ENCODE measurements at regions of chr9 and their contacts with region 1.

Region 1: GRCh38 chr9:91334053-91334452 is 27.7 kb downstream of the AUH start:
- DNase-seq: no peak
- H3K4me3 Mint-ChIP-seq: no peak overlapping the region
- H3K27ac Mint-ChIP-seq: no peak overlapping the region
- H3K4me1 Mint-ChIP-seq: peaks cover 12% of the 10 kb centered on the region
- H3K27me3 Mint-ChIP-seq: no peaks in the 10 kb centered on the region

Region 2: DNA sequence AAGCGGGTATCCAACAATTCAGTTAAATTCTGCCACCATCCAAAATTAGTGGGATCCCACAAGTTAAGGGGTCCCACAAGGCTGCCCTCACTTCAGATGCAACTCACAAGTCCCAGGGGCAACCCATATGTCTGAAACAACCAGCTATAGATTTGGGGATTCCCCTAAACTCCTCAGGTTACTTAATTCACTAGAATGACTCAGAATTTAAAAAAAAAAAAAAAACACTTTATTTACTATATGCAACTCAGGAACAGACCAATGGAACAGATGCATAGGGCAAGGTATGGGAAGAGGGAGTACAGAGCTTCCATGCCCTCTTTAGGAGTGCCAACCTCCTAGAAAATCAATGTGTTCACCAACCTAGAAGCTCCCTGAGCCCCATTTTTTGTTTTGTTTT is 12.6 kb after region 1 on chr9:
- CTCF ChIA-PET with region 1: interaction called, 11 read pairs
- POLR2A ChIA-PET with region 1: interaction called, 4 read pairs
- DNase-seq: no peak
- H3K4me3 Mint-ChIP-seq: no peak overlapping the region
- H3K27ac Mint-ChIP-seq: no peak overlapping the region
- H3K4me1 Mint-ChIP-seq: peaks cover 38% of the 10 kb centered on the region
- H3K27me3 Mint-ChIP-seq: no peaks in the 10 kb centered on the region